ENCODE measurements at regions of chr22 and their contacts with region 1.

Region 1: GRCh38 chr22:42780070-42780540 is 59.4 kb upstream of the A4GALT start:
- DNase-seq: peak; percentile 52
- ATAC-seq: peak; percentile 78 to 89

Region 2: GRCh38 chr22:42820066-42820763 is 40.1 kb after region 1 on chr22:
- intact Hi-C with region 1: loop called in 1 of 2 experiments (anchors 5 kb)
- DNase-seq: no peak
- ATAC-seq: no peak